ENCODE measurements at regions of chr2 and their contacts with region 1.

Region 1: GRCh38 chr2:135531231-135532228 is at the start of gene R3HDM1:
- DNase-seq: peak; percentile 93 to 98
- H3K4me3 ChIP-seq: peak within 1 kb of the TSS; percentile 75 to 94 (median 83)
- H3K27ac ChIP-seq: peak within 1 kb of the TSS; percentile 95
- H3K4me1 ChIP-seq: no peaks in the 10 kb centered on the region
- H3K27me3 ChIP-seq: no peaks in the 10 kb centered on the region
- CTCF ChIP-seq: peak in 2 of 3 experiments; percentile 29 to 32; a peak in 2 of 4 replicates
- EP300 ChIP-seq: no peak
- POLR2A ChIP-seq: no peak; a peak in 1 of 3 replicates
- RAD21 ChIP-seq: peak; percentile 54 to 60
- total RNA-seq, gene R3HDM1: 72.0 and 77.7 TPM in 2 replicates

Region 2: GRCh38 chr2:135494503-135494902 is 37.0 kb before region 1 on chr2:
- CTCF ChIA-PET with region 1: no interaction called
- POLR2A ChIA-PET with region 1: no interaction called
- DNase-seq: no peak
- H3K4me3 ChIP-seq: no peak overlapping the region
- H3K27ac ChIP-seq: no peak overlapping the region
- H3K4me1 ChIP-seq: no peaks in the 10 kb centered on the region
- H3K27me3 ChIP-seq: no peaks in the 10 kb centered on the region
- CTCF ChIP-seq: no peak
- EP300 ChIP-seq: no peak
- POLR2A ChIP-seq: no peak
- RAD21 ChIP-seq: no peak

Region 3: GRCh38 chr2:135546436-135546835 is 14.9 kb after region 1 on chr2:
- CTCF ChIA-PET with region 1: interaction called, 6 read pairs
- POLR2A ChIA-PET with region 1: interaction called, 12 read pairs
- DNase-seq: no peak
- H3K4me3 ChIP-seq: no peak overlapping the region
- H3K27ac ChIP-seq: no peak overlapping the region
- H3K4me1 ChIP-seq: peaks cover 0 to 2% (median 0%) of the 10 kb centered on the region in 4 experiments; a peak in 1 of 7 replicates
- H3K27me3 ChIP-seq: no peaks in the 10 kb centered on the region
- CTCF ChIP-seq: no peak
- EP300 ChIP-seq: no peak
- POLR2A ChIP-seq: no peak
- RAD21 ChIP-seq: no peak

Measured in H1 (cell line).